ENCODE measurements at regions of chr12 and their contacts with region 1.

Region 1: DNA sequence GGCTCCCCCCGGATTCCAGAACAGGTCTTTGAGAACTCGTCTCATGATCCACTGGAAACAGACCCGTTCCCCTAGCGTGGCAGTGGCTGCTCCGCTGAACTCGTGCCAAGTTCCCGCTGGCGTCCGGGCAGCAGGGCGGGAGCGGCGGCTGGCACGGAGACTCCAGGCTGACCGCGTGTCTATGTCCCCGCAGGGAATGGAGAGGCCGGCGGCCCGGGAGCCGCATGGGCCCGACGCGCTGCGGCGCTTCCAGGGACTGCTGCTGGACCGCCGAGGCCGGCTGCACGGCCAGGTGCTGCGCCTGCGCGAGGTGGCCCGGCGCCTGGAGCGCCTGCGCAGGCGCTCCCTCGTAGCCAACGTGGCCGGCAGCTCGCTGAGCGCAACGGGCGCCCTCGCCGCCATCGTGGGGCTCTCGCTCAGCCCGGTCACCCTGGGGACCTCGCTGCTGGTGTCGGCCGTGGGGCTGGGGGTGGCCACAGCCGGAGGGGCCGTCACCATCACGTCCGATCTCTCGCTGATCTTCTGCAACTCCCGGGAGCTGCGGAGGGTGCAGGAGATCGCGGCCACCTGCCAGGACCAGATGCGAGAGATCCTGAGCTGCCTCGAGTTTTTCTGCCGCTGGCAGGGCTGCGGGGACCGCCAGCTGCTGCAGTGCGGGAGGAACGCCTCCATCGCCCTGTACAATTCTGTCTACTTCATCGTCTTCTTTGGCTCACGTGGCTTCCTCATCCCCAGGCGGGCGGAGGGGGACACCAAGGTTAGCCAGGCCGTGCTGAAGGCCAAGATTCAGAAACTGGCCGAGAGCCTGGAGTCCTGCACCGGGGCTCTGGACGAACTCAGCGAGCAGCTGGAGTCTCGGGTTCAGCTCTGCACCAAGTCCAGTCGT is 1.5 kb downstream of the APOLD1 start:
- DNase-seq: peak; percentile 67
- ATAC-seq: peak; percentile 88
- H3K4me3 Mint-ChIP-seq: peak overlapping the region; percentile 86
- H3K27ac Mint-ChIP-seq: peak overlapping the region; percentile 89
- H3K4me1 Mint-ChIP-seq: peaks cover 36% of the 10 kb centered on the region
- H3K27me3 Mint-ChIP-seq: no peaks in the 10 kb centered on the region
- CTCF ChIP-seq: no peak

Region 2: DNA sequence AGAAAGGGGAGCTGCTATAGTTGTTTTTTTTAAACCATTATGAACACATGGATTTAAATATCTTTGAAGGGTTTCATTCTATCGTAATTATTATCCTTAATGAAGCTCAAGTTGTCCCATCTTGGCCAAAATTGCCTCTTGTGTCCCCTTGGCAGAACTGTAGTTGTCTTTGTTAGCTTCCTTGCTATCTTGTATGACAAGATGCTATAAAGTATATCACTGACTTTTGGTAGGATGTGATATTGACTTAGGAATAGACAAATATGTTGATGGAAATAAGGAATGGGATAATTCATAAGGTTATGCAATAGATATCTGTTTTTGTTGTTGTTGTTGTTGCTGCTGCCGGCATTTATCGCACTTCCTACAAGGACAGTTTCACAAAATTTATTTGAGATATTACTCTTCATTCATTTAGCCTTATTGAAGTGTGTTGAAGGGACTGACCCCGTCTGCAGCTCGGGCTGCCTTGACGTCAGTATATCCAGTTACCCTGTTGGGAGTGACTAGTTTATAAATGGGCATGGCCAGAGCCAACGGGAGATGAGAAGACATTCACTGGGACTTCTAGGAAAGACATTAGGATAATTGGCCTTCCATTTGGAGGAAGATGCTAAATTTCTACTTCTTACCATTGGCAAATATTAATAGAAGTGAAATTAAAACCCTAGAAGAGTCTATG is 27.6 kb before region 1 on chr12:
- CTCF ChIA-PET with region 1: no interaction called
- POLR2A ChIA-PET with region 1: no interaction called
- intact Hi-C with region 1: no loop called
- DNase-seq: no peak
- ATAC-seq: no peak
- H3K4me3 Mint-ChIP-seq: no peak overlapping the region
- H3K27ac Mint-ChIP-seq: no peak overlapping the region
- H3K4me1 Mint-ChIP-seq: no peaks in the 10 kb centered on the region
- H3K27me3 Mint-ChIP-seq: no peaks in the 10 kb centered on the region
- CTCF ChIP-seq: no peak

Region 3: DNA sequence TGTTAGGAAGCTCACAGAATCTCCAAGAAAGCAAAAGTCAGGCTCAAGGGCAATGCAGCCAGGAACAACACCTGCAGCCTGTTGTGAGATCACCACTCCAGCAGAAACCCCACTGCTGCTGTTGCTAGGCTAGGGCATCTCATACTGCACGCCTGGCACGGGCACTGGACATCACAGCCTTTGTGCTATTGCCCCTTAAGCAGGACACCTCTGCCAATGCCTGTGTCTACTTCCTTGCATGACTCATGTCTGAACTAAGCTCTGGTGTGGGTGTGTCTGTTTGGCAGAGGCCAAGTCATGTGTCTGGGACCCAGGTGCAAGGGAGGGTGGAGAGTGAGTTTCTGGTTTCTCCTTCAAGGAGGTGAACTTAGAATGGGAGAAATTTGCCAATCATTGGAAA is 16.2 kb after region 1 on chr12:
- CTCF ChIA-PET with region 1: interaction called, 108 read pairs
- POLR2A ChIA-PET with region 1: interaction called, 7 read pairs
- intact Hi-C with region 1: no loop called
- DNase-seq: peak; percentile 62
- ATAC-seq: peak; percentile 68
- H3K4me3 Mint-ChIP-seq: no peak overlapping the region
- H3K27ac Mint-ChIP-seq: peak overlapping the region; percentile 69
- H3K4me1 Mint-ChIP-seq: peaks cover 50% of the 10 kb centered on the region
- H3K27me3 Mint-ChIP-seq: no peaks in the 10 kb centered on the region
- CTCF ChIP-seq: no peak

Region 4: DNA sequence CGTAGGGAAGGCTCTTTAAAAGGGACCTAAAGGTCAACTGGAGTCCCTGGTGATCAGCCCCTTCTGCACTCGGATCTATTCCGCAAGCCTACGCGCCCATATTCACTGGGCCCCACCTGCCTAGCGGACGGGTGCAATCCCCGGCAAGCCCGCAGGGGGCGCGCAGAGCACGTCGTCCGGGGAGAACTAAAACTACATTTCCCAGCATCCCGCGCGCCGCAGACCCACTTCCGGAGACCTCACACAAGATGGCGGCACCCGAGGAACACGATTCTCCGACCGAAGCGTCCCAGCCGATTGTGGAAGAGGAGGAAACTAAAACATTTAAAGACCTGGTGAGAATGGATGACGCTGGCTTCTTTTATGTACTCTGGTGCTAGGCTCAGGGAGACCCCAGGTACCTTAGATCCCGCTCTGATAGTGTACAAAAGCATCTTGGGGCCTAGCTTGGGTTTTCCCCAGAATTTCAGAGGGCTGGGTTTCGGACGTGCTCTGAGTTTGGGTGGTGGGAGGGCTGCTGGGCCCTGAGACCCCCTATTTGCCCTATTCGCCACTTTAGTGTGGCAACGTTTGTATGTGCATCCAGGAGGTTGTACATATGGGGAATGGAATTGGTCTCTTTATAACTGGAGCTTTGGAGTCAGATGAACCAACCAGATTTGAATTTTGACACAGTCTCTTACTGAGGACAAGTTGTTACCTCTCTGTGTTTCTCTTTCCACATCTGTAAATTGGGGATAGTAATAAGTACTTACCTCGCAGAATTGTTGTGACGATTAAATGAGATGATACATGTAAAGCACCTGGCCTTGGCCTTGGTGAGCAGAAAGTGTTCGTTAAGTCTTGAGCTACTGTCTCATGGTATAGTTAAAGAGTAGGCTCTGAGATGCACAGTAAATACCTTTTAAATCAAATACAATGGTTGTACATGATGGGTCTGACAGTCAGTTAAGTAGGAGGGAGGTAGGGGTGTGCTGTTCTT is 26.5 kb after region 1 on chr12 and contains the start of gene DDX47:
- CTCF ChIA-PET with region 1: interaction called, 72 read pairs
- POLR2A ChIA-PET with region 1: interaction called, 5 read pairs
- intact Hi-C with region 1: no loop called
- DNase-seq: peak; percentile 99
- ATAC-seq: peak; percentile 94
- H3K4me3 Mint-ChIP-seq: peak within 1 kb of the TSS; percentile 99
- H3K27ac Mint-ChIP-seq: peak within 1 kb of the TSS; percentile 93
- H3K4me1 Mint-ChIP-seq: peaks cover 58% of the 10 kb centered on the region
- H3K27me3 Mint-ChIP-seq: no peaks in the 10 kb centered on the region
- CTCF ChIP-seq: peak; percentile 90
- total RNA-seq, gene DDX47: 86.0 to 96.9 TPM

Region 5: DNA sequence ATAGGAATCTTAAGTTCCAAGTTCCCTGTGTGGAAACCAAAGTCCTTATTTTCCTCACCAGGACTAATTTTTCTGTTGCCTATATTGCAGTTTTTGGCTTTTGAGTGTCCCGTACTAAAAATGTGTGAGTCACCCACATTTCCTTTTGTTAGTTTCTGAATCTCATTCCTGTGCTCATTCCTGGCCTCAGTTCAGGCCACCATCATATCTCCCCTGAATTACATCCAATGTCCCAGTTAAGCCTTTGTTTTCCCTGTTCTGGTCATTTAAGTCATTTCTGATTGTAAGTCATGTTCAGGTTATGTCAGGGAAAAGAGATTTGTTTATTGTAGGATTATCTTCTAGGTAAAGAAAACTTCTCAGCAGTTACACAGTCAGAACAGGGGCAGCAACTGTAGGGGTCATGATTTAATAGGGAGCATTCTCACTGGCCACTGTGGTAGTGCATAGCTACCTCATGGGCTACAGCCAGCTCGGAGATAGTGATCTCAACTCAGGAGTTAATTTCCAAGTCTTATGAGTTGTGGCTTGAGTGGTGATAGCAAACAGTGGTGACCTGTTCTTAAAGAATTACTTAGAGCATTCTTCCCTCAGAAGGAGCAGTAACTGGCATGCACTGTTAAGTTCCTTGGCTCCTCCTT is 32.8 kb after region 1 on chr12:
- CTCF ChIA-PET with region 1: interaction called, 72 read pairs
- POLR2A ChIA-PET with region 1: interaction called, 3 read pairs
- intact Hi-C with region 1: no loop called
- DNase-seq: no peak
- ATAC-seq: no peak
- H3K4me3 Mint-ChIP-seq: no peak overlapping the region
- H3K27ac Mint-ChIP-seq: peak overlapping the region; percentile 4
- H3K4me1 Mint-ChIP-seq: peaks cover 57% of the 10 kb centered on the region
- H3K27me3 Mint-ChIP-seq: no peaks in the 10 kb centered on the region
- CTCF ChIP-seq: no peak

Measured in activated CD8-positive, alpha-beta T cell treated with anti-CD3 and anti-CD28 coated beads for 36 hours (primary cell).